ENCODE measurements at regions of chr10 and their contacts with region 1.

Region 1: GRCh38 chr10:56867236-56867635 is 506.2 kb upstream of the ZWINT start:
- DNase-seq: no peak
- H3K4me3 ChIP-seq: no peak overlapping the region
- H3K27ac ChIP-seq: no peak overlapping the region
- H3K4me1 ChIP-seq: no peaks in the 10 kb centered on the region
- H3K27me3 ChIP-seq: no peaks in the 10 kb centered on the region
- CTCF ChIP-seq: no peak

Region 2: DNA sequence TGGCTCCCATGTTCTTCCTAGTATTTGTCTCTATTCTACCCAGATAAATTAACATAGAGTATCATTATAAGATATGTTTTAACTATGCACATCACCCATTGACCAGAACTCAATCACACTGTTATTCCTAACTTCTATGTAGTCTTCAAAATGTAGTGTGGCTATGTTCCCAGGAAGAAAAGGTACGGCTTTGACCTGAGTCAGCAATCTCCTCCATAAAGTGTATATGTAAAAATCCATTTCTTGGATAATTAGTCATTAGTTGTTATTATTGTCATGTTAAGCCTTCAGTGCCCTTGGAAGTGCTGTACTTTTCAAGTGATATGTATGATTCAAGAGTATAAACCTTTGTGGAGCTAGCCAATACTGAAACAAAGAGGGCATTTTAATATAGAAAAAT is 62.2 kb before region 1 on chr10:
- CTCF ChIA-PET with region 1: no interaction called
- POLR2A ChIA-PET with region 1: no interaction called
- intact Hi-C with region 1: loop called (anchors 10 kb)
- DNase-seq: no peak
- H3K4me3 ChIP-seq: no peak overlapping the region
- H3K27ac ChIP-seq: no peak overlapping the region
- H3K4me1 ChIP-seq: no peaks in the 10 kb centered on the region
- H3K27me3 ChIP-seq: no peaks in the 10 kb centered on the region
- CTCF ChIP-seq: no peak

Region 3: DNA sequence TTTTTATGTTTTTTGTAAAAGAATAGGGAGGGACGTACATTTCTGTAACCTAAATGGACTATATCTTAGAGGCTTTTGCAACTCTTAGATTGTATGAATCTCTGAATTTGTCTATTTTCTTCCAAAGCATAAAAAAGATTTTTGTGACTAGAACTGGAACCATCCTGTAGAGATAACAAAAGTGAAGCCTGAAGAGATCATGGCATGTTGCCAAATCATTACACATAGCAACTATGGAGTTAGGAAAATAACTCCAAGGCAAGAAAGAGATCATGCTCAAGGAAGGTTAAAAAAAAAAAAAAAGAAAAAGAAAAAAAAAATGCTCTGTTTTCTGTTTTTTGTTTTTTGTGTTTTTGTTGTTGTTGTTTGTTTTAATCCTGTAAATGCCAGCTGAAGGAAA is 61.5 kb after region 1 on chr10:
- CTCF ChIA-PET with region 1: no interaction called
- POLR2A ChIA-PET with region 1: no interaction called
- intact Hi-C with region 1: no loop called
- DNase-seq: no peak
- H3K4me3 ChIP-seq: no peak overlapping the region
- H3K27ac ChIP-seq: no peak overlapping the region
- H3K4me1 ChIP-seq: no peaks in the 10 kb centered on the region
- H3K27me3 ChIP-seq: no peaks in the 10 kb centered on the region
- CTCF ChIP-seq: no peak